ENCODE measurements at regions of chr1 and their contacts with region 1.

Region 1: GRCh38 chr1:84573967-84574842 is at the start of gene CTBS:
- DNase-seq: peak; percentile 93 to 94 (median 94)
- H3K4me3 ChIP-seq: peak within 1 kb of the TSS; percentile 48 to 96 (median 77)
- H3K4me3 Mint-ChIP-seq: peak within 1 kb of the TSS; percentile 98
- H3K27ac ChIP-seq: peak within 1 kb of the TSS; percentile 92 to 100
- H3K27ac Mint-ChIP-seq: peak within 1 kb of the TSS; percentile 99 to 100 (median 100)
- H3K4me1 ChIP-seq: peaks cover 26 to 41% of the 10 kb centered on the region in 2 donors
- H3K4me1 Mint-ChIP-seq: peaks cover 41% of the 10 kb centered on the region
- H3K27me3 ChIP-seq: no peaks in the 10 kb centered on the region
- H3K27me3 Mint-ChIP-seq: peaks cover 0 to 2% (median 0%) of the 10 kb centered on the region in 3 donors
- CTCF ChIP-seq: no peak
- polyA plus RNA-seq, gene CTBS: 29.2 to 62.2 (median 44.8) TPM

Region 2: DNA sequence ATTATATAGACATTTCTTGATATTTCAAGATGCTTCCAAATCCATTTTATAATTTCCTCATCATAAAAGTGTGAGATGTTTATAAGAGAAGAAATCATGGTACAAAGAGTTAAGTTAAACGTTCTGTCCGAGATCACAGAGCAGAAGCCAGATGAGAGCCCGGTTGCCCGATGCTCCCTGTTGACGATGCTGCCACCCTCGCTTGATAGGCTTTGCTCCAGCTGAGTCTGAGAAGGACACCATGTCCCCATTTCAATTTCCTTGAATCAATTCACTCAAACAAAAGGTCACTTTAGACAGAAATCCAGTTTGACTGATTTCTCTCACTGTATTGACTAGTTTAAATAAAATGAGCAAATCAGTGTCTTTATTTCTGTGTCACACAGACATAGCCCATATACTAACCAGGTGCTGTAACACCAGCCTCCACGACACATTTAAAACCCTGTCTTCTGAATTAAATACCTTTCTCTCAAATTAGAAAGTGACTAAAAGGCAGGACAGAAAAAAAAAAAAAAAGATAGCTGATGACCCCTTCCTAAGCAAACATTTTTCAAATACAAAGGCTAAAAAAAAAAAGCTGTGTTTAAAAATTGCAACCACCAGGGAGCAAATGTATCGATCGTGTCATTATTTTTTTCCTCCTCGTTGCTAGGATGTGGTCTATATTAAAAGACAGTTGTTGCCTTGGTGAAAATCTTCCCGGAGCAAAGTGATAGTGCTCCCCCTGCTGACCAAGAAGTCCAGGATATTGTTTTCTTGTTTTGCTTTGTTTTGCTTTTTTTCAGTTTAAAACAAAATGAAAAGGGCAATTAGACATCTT is 140.7 kb before region 1 on chr1:
- intact Hi-C with region 1: loop called in 1 of 2 experiments (anchors 10 kb)
- DNase-seq: peak; percentile 51 to 63 (median 60)
- H3K4me3 ChIP-seq: peak overlapping the region; percentile 21 to 64 (median 58)
- H3K4me3 Mint-ChIP-seq: peak overlapping the region; percentile 71 to 82
- H3K27ac ChIP-seq: peak overlapping the region in 1 of 2 donors; percentile 88
- H3K27ac Mint-ChIP-seq: peak overlapping the region in 4 of 7 donors; percentile 44 to 76 (median 68)
- H3K4me1 ChIP-seq: peaks cover 51 to 61% of the 10 kb centered on the region in 2 donors
- H3K4me1 Mint-ChIP-seq: peaks cover 19% of the 10 kb centered on the region
- H3K27me3 ChIP-seq: no peaks in the 10 kb centered on the region
- H3K27me3 Mint-ChIP-seq: no peaks in the 10 kb centered on the region
- CTCF ChIP-seq: peak; percentile 87

Region 3: DNA sequence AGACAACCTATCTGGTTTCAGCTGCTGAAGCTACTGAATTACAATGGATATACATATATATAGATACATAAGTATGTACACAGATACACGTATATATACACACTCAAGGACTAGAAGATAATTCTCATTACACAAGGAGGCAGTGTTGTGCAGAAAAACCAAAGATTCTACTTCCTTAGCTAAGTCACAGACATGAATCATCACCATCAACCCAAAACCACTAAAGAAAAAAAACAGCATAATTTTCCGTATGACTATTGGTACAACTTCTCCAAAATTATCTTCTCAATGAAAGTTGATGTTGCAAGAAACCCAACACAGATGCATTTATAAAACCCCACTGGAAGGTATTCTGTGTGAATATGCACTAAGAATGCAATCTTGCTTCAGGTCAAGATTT is 131.9 kb before region 1 on chr1:
- intact Hi-C with region 1: loop called (anchors 10 kb)
- DNase-seq: peak; percentile 88 to 97 (median 94)
- H3K4me3 ChIP-seq: no peak overlapping the region
- H3K4me3 Mint-ChIP-seq: no peak overlapping the region
- H3K27ac ChIP-seq: peak overlapping the region in 1 of 2 donors; percentile 45
- H3K27ac Mint-ChIP-seq: peak overlapping the region; percentile 79 to 95 (median 89)
- H3K4me1 ChIP-seq: peaks cover 22 to 27% of the 10 kb centered on the region in 2 donors
- H3K4me1 Mint-ChIP-seq: peaks cover 19% of the 10 kb centered on the region
- H3K27me3 ChIP-seq: no peaks in the 10 kb centered on the region
- H3K27me3 Mint-ChIP-seq: no peaks in the 10 kb centered on the region
- CTCF ChIP-seq: peak; percentile 73

Region 4: GRCh38 chr1:84506002-84506728 is 68.0 kb before region 1 on chr1 and contains the starts of genes GNG5 and SPATA1:
- intact Hi-C with region 1: loop called (anchors 2 to 5 kb)
- DNase-seq: peak; percentile 95 to 98 (median 98)
- H3K4me3 ChIP-seq: peak within 1 kb of the TSS; percentile 78 to 99 (median 97)
- H3K4me3 Mint-ChIP-seq: peak within 1 kb of the TSS; percentile 98 to 100
- H3K27ac ChIP-seq: peak within 1 kb of the TSS; percentile 94 to 97
- H3K27ac Mint-ChIP-seq: peak within 1 kb of the TSS; percentile 98 to 100 (median 100)
- H3K4me1 ChIP-seq: peaks cover 26 to 42% of the 10 kb centered on the region in 2 donors
- H3K4me1 Mint-ChIP-seq: peaks cover 30% of the 10 kb centered on the region
- H3K27me3 ChIP-seq: no peaks in the 10 kb centered on the region
- H3K27me3 Mint-ChIP-seq: no peaks in the 10 kb centered on the region
- CTCF ChIP-seq: no peak
- polyA plus RNA-seq, gene GNG5: 135 to 555 (median 377) TPM
- polyA plus RNA-seq, gene SPATA1: 0.40 to 1.9 (median 0.43) TPM

Region 5: DNA sequence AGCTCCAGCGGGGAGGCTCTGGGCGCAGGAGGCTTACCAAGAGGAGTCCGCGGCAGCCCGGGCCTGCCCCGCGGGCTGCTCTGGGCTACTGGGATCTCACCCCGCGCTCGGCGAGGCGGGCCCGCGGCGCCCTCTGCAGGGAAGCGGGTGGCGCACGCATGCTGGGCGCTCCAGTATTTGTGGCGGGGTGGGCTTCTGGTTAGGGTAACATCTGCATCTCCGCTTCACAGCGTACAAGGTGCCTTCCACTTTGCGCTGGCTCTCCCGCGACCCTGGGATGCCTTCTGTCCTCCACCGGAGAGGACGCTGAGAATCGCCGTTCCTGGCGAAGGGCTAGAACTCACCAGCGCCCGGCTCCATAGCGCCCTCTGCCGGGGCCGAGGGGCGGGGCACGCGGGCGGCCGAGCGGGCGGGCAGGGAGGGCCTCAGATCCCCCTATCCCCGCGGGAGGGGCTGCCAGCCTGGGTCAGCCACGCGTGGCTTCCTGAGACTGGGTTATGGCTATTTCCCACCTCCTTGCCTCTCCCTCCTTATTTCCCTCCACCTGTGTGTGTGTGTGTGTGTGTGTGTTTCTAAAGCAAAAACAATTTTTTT is 46.6 kb after region 1 on chr1:
- intact Hi-C with region 1: loop called in 1 of 2 experiments (anchors 2 kb)
- DNase-seq: peak; percentile 64 to 72 (median 65)
- H3K4me3 ChIP-seq: peak overlapping the region; percentile 59 to 85 (median 63)
- H3K4me3 Mint-ChIP-seq: peak overlapping the region; percentile 93 to 97
- H3K27ac ChIP-seq: peak overlapping the region in 1 of 2 donors; percentile 76
- H3K27ac Mint-ChIP-seq: peak overlapping the region; percentile 62 to 98 (median 93)
- H3K4me1 ChIP-seq: peaks cover 5 to 19% of the 10 kb centered on the region in 2 donors
- H3K4me1 Mint-ChIP-seq: peaks cover 16% of the 10 kb centered on the region
- H3K27me3 ChIP-seq: no peaks in the 10 kb centered on the region
- H3K27me3 Mint-ChIP-seq: peaks cover 0 to 8% (median 2%) of the 10 kb centered on the region in 3 donors
- CTCF ChIP-seq: peak; percentile 100

Region 6: GRCh38 chr1:84690397-84691121 is 116.4 kb after region 1 on chr1 and contains the start of gene SSX2IP:
- intact Hi-C with region 1: loop called (anchors 10 kb)
- DNase-seq: peak; percentile 94 to 96 (median 94)
- H3K4me3 ChIP-seq: peak within 1 kb of the TSS; percentile 59 to 91 (median 81)
- H3K4me3 Mint-ChIP-seq: peak within 1 kb of the TSS; percentile 89 to 95
- H3K27ac ChIP-seq: peak within 1 kb of the TSS; percentile 53 to 70
- H3K27ac Mint-ChIP-seq: peak within 1 kb of the TSS; percentile 76 to 94 (median 88)
- H3K4me1 ChIP-seq: peaks cover 29 to 40% of the 10 kb centered on the region in 2 donors
- H3K4me1 Mint-ChIP-seq: peaks cover 40% of the 10 kb centered on the region
- H3K27me3 ChIP-seq: no peaks in the 10 kb centered on the region
- H3K27me3 Mint-ChIP-seq: peaks cover 0 to 3% (median 0%) of the 10 kb centered on the region in 3 donors
- CTCF ChIP-seq: no peak
- polyA plus RNA-seq, gene SSX2IP: 0.85 to 2.8 (median 2.2) TPM

Region 7: GRCh38 chr1:85276215-85276977 is 702.2 kb after region 1 on chr1 and contains the start of gene BCL10:
- intact Hi-C with region 1: loop called in 1 of 2 experiments (anchors 10 kb)
- DNase-seq: peak; percentile 99 to 100 (median 100)
- H3K4me3 ChIP-seq: peak within 1 kb of the TSS; percentile 83 to 94 (median 92)
- H3K4me3 Mint-ChIP-seq: peak within 1 kb of the TSS; percentile 85 to 91
- H3K27ac ChIP-seq: peak within 1 kb of the TSS; percentile 95
- H3K27ac Mint-ChIP-seq: peak within 1 kb of the TSS; percentile 96 to 99 (median 98)
- H3K4me1 ChIP-seq: peaks cover 44 to 60% of the 10 kb centered on the region in 2 donors
- H3K4me1 Mint-ChIP-seq: peaks cover 57% of the 10 kb centered on the region
- H3K27me3 ChIP-seq: no peaks in the 10 kb centered on the region
- H3K27me3 Mint-ChIP-seq: peaks cover 1 to 3% (median 2%) of the 10 kb centered on the region in 3 donors
- CTCF ChIP-seq: no peak
- polyA plus RNA-seq, gene BCL10: 22.7 to 27.9 (median 26.9) TPM